Prostate gland (tissue), 2 donors: ENCODE measurements at regions of chr10 and their contacts with region 1.

Region 1: DNA sequence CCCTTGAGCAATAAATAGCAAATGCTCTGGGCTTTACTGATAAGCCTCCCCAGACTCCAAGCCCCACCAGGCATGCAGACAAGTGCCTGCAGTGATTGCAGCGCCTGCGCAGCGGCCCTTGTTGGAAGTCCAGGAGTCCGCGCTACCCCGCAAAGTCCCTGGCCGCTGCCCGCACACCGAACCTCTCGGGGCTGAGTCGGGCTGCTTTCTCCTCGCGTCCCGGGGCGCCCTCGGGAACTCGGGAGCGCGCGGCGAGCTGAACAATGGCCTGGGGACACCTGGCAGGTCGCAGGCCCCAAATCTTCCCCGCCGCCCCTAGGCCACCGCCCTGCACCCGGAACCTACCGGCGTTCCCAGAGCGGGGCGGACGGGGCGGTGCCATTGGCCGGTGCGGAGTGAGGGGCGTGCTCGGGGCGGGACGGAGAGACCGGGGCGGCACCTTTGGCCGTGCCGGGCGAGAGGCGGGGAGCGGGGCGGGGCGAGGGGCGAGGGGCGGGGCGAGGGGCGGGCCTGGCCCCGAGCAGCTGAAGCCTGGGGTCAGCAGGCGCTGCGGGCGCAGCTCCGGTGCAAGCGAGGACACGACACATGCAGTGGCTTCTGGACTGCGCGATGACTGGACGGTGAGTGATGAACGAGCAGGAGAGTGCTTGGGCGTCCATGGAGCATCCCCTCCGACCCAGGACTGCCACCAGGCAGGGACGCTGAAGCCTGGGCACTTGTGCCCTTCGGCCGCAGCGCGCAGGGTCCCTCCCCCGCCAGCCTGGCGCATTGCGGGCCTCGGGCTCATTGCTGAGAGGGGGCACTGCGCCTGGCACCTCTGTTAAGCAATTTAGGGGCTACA is at the start of gene RASSF4:
- DNase-seq: peak; percentile 89
- H3K4me3 ChIP-seq: peak within 1 kb of the TSS; percentile 51 to 72
- H3K27ac ChIP-seq: peak within 1 kb of the TSS; percentile 74 to 76
- H3K4me1 ChIP-seq: peaks cover 12% of the 10 kb centered on the region
- H3K27me3 ChIP-seq: no peaks in the 10 kb centered on the region
- CTCF ChIP-seq: peak in 1 of 4 experiments; percentile 26
- POLR2A ChIP-seq: peak; percentile 69
- total RNA-seq, gene RASSF4: 6.1 to 31.0 TPM

Region 2: GRCh38 chr10:45000752-45001380 is 41.4 kb after region 1 on chr10 and contains the start of gene ZNF22:
- intact Hi-C with region 1: loop called (anchors 5 kb)
- DNase-seq: no peak
- H3K4me3 ChIP-seq: peak within 1 kb of the TSS; percentile 52 to 59
- H3K27ac ChIP-seq: peak within 1 kb of the TSS; percentile 89 to 90
- H3K4me1 ChIP-seq: peaks cover 6% of the 10 kb centered on the region
- H3K27me3 ChIP-seq: no peaks in the 10 kb centered on the region
- CTCF ChIP-seq: peak in 3 of 4 experiments; percentile 26 to 40 (median 32)
- POLR2A ChIP-seq: peak; percentile 46
- total RNA-seq, gene ZNF22: 15.8 to 24.2 TPM